ENCODE measurements at regions of chr6 and their contacts with region 1.

Region 1: DNA sequence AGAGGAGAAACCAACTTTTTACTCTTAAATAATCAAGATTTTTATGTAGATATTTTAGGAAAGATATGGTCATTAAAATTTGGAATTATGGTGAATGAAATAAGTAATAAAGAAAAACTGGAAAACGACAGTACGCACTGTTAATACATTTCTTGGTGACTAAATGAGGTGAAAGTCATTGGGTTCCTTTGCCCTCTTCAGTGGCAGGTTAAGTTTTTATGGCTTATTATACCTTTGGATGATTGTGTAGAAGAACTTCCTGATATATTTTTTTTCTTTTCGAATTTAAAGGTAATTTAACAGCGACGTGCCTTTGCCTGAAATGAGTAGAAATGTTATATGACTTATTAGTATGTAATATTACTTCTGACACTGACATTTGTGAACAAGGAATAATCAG is 43.4 kb downstream of the FOXO3 start:
- H3K4me3 Mint-ChIP-seq: no peak overlapping the region
- H3K27ac Mint-ChIP-seq: no peak overlapping the region
- H3K4me1 Mint-ChIP-seq: peaks cover 21% of the 10 kb centered on the region
- H3K27me3 Mint-ChIP-seq: no peaks in the 10 kb centered on the region

Region 2: GRCh38 chr6:108565893-108566292 is 38.3 kb before region 1 on chr6:
- intact Hi-C with region 1: loop called (anchors 5 kb)
- H3K4me3 Mint-ChIP-seq: no peak overlapping the region
- H3K27ac Mint-ChIP-seq: peak overlapping the region; percentile 78
- H3K4me1 Mint-ChIP-seq: peaks cover 82% of the 10 kb centered on the region
- H3K27me3 Mint-ChIP-seq: peaks cover 5% of the 10 kb centered on the region